Left cardiac atrium (tissue), 4 donors: ENCODE measurements at regions of chr6 and their contacts with region 1.

Region 1: GRCh38 chr6:110039364-110039980 is 61.4 kb downstream of the GPR6 start:
- DNase-seq: peak; percentile 88
- ATAC-seq: peak; percentile 95

Region 2: DNA sequence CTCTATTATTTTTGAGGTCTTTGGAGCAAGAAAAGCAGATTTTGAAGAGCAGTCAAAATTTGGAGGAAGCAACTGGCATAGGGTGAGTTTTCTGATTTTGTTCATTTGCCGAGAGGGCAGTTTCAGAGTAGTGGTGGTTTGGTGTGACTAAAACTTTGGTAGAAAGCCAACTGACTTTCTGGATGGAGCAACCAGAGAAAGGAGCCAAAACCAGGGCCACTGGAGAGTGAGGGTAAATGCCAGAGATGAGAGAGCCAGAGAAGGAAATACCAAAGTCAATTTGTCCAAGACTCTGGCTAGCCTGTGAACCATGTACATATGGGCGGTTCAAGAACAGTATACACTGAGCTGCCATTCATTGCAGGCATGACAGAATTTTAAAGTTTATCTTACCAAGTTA is 516.0 kb before region 1 on chr6:
- intact Hi-C with region 1: loop called in 1 of 2 experiments (anchors 5 kb)
- DNase-seq: no peak
- ATAC-seq: peak in 1 of 2 donors; percentile 70

Region 3: DNA sequence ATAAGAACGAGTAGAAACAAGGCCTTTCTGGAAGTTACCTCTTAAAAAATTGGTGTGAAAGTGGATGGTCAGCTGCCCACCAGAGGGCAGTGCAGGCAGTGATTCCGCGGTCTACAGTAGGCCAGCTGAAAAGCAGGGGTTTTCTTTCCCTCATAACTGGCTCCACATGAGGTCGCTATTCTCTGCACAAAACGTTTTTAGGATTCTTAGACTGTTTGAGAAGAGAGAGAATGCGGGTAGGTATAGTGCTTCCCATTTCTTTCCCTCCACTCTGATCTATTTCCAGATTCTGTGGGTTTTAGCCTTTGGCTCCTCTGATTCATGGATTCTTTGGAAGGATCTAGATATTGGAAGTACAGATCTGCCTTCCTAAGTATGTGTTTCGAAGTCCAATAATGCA is 334.2 kb before region 1 on chr6:
- intact Hi-C with region 1: loop called (anchors 1 to 2 kb)
- DNase-seq: peak; percentile 78
- ATAC-seq: peak; percentile 94 to 95

Region 4: GRCh38 chr6:110255211-110255755 is 215.8 kb after region 1 on chr6:
- intact Hi-C with region 1: no loop called
- DNase-seq: no peak
- ATAC-seq: no peak